ENCODE measurements at regions of chr11 and their contacts with region 1.

Region 1: GRCh38 chr11:68946465-68947036 is 34.2 kb downstream of the MRGPRD start:
- DNase-seq: no peak
- H3K4me3 ChIP-seq: no peak overlapping the region
- H3K27ac ChIP-seq: peak overlapping the region; percentile 79 to 89 (median 83)
- H3K4me1 ChIP-seq: peaks cover 13 to 29% (median 21%) of the 10 kb centered on the region in 4 donors
- H3K27me3 ChIP-seq: no peaks in the 10 kb centered on the region
- CTCF ChIP-seq: no peak
- EP300 ChIP-seq: no peak
- POLR2A ChIP-seq: no peak

Region 2: GRCh38 chr11:68598816-68599653 is 347.5 kb before region 1 on chr11:
- in situ Hi-C with region 1: no loop called
- intact Hi-C with region 1: no loop called
- DNase-seq: no peak
- H3K4me3 ChIP-seq: no peak overlapping the region
- H3K27ac ChIP-seq: no peak overlapping the region
- H3K4me1 ChIP-seq: no peaks in the 10 kb centered on the region
- H3K27me3 ChIP-seq: no peaks in the 10 kb centered on the region
- CTCF ChIP-seq: no peak
- EP300 ChIP-seq: no peak
- POLR2A ChIP-seq: no peak

Region 3: GRCh38 chr11:69000831-69001242 is 54.3 kb after region 1 on chr11:
- in situ Hi-C with region 1: no loop called
- intact Hi-C with region 1: loop called (anchors 5 kb)
- DNase-seq: peak; percentile 49
- H3K4me3 ChIP-seq: no peak overlapping the region
- H3K27ac ChIP-seq: peak overlapping the region; percentile 72 to 98 (median 94)
- H3K4me1 ChIP-seq: peaks cover 30 to 60% (median 46%) of the 10 kb centered on the region in 4 donors
- H3K27me3 ChIP-seq: no peaks in the 10 kb centered on the region
- CTCF ChIP-seq: peak; percentile 44 to 68 (median 49)
- EP300 ChIP-seq: no peak
- POLR2A ChIP-seq: no peak